Endothelial cell of umbilical vein (primary cell): ENCODE measurements at regions of chr5 and their contacts with region 1.

Region 1: GRCh38 chr5:72842816-72843215 is 26.4 kb downstream of the TNPO1 start:
- DNase-seq: peak; percentile 92
- H3K4me3 ChIP-seq: peak overlapping the region in 1 of 3 experiments; percentile 25
- H3K27ac ChIP-seq: peak overlapping the region; percentile 95
- H3K4me1 ChIP-seq: peaks cover 70% of the 10 kb centered on the region
- H3K27me3 ChIP-seq: no peaks in the 10 kb centered on the region
- CTCF ChIP-seq: peak in 1 of 2 donors; percentile 11
- POLR2A ChIP-seq: no peak

Region 2: DNA sequence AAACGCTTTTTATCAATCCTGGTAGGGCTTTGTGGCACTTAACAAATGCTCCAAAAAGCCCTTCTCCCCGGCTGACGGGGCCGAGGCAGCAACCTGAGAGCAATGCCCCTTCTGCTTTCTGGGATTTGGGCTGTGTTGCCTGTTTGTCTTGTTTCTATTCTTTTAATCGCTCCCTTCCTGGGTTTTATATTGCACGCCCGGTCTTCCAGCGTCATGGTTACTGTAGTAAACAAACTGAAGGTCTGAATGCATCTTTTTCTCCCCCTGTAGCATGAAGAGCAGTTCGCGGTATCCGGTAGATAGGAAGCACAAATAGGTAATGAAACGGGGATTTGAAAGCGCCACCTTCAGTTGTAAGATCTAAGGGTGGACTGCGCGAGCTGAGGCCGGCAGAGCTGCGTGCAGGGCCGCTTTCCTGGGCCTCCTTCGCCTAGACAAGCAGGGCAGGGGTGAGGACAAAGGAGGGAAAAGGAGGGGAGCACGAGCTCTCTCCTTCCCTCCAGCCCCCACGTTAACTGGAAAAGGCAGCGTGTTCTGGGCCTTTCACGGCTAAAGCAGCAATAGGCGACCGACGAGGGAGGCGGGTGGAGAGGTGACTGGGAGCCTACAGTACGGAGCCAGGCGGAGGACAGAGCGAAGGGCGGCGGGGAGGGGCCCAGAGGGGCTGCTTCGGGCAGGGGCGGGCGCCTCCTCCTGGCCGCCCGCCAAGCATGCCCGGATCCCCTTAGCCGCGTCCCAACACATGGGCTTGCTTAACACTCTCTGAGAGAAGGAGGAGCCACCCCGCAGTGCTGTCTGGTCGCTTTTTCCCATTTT is 286.3 kb before region 1 on chr5:
- CTCF ChIA-PET with region 1: interaction called, 3 read pairs
- POLR2A ChIA-PET with region 1: interaction called, 3 read pairs
- dilution Hi-C with region 1: no loop called
- intact Hi-C with region 1: loop called (anchors 2 kb)
- DNase-seq: peak; percentile 85
- H3K4me3 ChIP-seq: peak overlapping the region in 1 of 3 experiments; percentile 4
- H3K27ac ChIP-seq: peak overlapping the region; percentile 97
- H3K4me1 ChIP-seq: peaks cover 83% of the 10 kb centered on the region
- H3K27me3 ChIP-seq: no peaks in the 10 kb centered on the region
- CTCF ChIP-seq: no peak
- POLR2A ChIP-seq: peak; percentile 92

Region 3: DNA sequence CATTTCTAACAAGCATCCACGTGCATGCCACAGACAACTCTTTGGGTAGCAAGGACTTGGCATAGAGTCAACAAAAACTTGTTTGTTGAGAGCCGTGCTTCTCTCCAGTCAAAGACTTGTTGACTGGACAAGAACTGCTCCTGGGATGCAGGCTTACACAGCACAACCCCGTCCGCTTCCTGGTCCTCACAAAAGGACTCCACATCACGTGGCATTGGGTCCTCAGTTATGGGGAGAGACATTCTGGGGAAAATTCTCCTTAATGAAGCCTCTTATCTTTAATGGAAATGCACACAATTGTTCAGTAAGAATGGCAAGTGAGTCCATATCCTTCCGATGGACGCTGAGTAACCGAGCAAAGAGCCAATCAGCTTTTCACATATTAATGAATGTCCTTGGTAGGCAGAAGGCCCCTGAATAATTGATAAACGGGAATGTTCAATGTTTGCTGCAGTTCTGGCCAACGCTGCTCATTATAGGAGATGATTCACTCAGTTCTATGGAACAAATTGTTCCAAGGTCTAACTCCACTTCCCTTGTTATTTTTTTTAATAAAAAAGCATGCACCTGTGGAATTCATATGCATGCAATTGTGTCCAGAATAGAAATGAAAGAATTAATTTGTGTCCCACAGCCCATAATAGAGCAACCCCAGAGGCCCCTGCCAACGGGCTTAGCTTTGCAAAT is 238.6 kb before region 1 on chr5:
- CTCF ChIA-PET with region 1: no interaction called
- POLR2A ChIA-PET with region 1: no interaction called
- dilution Hi-C with region 1: no loop called
- intact Hi-C with region 1: loop called (anchors 1 kb)
- DNase-seq: peak; percentile 99
- H3K4me3 ChIP-seq: no peak overlapping the region
- H3K27ac ChIP-seq: peak overlapping the region; percentile 97
- H3K4me1 ChIP-seq: peaks cover 64% of the 10 kb centered on the region
- H3K27me3 ChIP-seq: no peaks in the 10 kb centered on the region
- CTCF ChIP-seq: no peak
- POLR2A ChIP-seq: peak; percentile 25

Region 4: GRCh38 chr5:72822944-72823343 is 19.9 kb before region 1 on chr5:
- CTCF ChIA-PET with region 1: interaction called, 37 read pairs
- POLR2A ChIA-PET with region 1: interaction called, 4 read pairs
- dilution Hi-C with region 1: no loop called
- intact Hi-C with region 1: loop called (anchors 1 kb)
- DNase-seq: no peak
- H3K4me3 ChIP-seq: no peak overlapping the region
- H3K27ac ChIP-seq: no peak overlapping the region
- H3K4me1 ChIP-seq: peaks cover 40% of the 10 kb centered on the region
- H3K27me3 ChIP-seq: no peaks in the 10 kb centered on the region
- CTCF ChIP-seq: no peak
- POLR2A ChIP-seq: no peak

Region 5: GRCh38 chr5:72829707-72830106 is 13.1 kb before region 1 on chr5:
- CTCF ChIA-PET with region 1: interaction called, 17 read pairs
- POLR2A ChIA-PET with region 1: interaction called, 3 read pairs
- dilution Hi-C with region 1: no loop called
- intact Hi-C with region 1: no loop called
- DNase-seq: no peak
- H3K4me3 ChIP-seq: no peak overlapping the region
- H3K27ac ChIP-seq: no peak overlapping the region
- H3K4me1 ChIP-seq: peaks cover 10% of the 10 kb centered on the region
- H3K27me3 ChIP-seq: no peaks in the 10 kb centered on the region
- CTCF ChIP-seq: no peak
- POLR2A ChIP-seq: no peak

Region 6: GRCh38 chr5:72871366-72872024 is 28.7 kb after region 1 on chr5:
- CTCF ChIA-PET with region 1: no interaction called
- POLR2A ChIA-PET with region 1: no interaction called
- dilution Hi-C with region 1: no loop called
- intact Hi-C with region 1: loop called (anchors 1 kb)
- DNase-seq: peak; percentile 90
- H3K4me3 ChIP-seq: peak overlapping the region in 1 of 3 experiments; percentile 9
- H3K27ac ChIP-seq: peak overlapping the region; percentile 92
- H3K4me1 ChIP-seq: peaks cover 43% of the 10 kb centered on the region
- H3K27me3 ChIP-seq: no peaks in the 10 kb centered on the region
- CTCF ChIP-seq: no peak
- POLR2A ChIP-seq: no peak